HEK293T (cell line): ENCODE measurements at regions of chr16 and their contacts with region 1.

Region 1: DNA sequence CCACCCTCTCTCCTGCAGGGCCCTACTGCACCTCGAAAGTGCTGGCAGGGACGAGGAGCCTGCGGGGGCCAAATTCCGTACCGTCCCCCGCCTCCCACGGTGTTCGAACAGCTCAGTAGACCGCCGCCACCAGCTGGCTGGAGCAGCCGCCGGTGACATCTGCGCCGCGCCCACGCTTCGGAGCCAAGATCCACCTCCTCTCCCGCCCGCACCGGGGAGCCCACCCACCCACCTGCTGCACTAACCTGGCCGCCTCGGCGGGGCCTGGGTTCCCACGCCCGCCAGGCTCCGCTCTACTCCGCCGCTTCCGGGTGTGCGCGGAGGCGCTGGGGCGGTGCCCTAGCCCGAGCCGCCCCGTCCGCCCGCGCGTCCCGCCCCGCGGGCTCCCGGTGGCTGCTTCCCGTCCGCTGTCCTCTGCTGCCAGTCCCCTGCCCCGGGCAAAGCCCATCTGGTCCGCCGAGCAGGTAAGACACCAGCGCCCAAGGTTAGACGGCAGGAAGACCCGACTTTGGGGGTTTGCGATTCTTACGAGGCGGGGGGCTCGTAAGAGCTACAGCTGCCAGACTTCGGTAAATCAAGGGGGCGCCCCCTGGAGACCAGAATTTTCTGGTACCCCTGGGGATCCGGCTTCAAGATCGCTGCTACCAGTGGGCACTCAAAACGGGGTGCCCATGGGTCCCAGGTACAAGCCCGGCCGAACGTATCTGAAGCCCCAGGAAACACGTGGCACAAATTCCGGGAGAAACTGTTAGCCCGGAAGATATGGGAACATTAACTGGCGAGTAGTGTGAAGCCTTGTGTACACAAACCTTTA is at the starts of genes FBXL8 and TRADD:
- DNase-seq: peak; percentile 73

Region 2: DNA sequence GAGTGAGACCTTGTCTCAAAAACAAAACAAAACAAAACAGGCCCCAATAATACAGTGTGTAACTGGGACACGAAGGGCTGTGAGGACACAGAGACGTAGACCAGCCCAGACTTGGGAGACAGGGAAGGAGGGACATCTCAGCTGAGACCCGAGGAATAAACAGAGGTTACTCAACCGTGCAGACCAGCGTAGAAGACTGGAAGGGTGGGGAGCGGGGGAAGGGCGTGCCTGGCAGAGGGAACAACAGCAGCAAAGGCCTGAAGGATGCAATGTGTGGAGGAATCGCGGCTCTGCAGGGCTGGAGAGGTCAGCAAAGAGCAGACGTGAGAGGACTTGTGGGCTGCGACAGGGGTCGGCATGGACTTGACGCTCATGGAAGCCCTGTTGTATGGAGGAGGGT is 183.1 kb before region 1 on chr16:
- CTCF ChIA-PET with region 1: interaction called, 10 read pairs
- POLR2A ChIA-PET with region 1: no interaction called
- DNase-seq: no peak

Region 3: GRCh38 chr16:67017810-67018488 is 141.9 kb before region 1 on chr16:
- CTCF ChIA-PET with region 1: interaction called, 18 read pairs
- POLR2A ChIA-PET with region 1: interaction called, 8 read pairs
- DNase-seq: peak; percentile 88

Region 4: GRCh38 chr16:67104061-67104460 is 55.7 kb before region 1 on chr16:
- CTCF ChIA-PET with region 1: interaction called, 17 read pairs
- POLR2A ChIA-PET with region 1: no interaction called
- DNase-seq: peak; percentile 35

Region 5: GRCh38 chr16:67129422-67129821 is 30.4 kb before region 1 on chr16:
- CTCF ChIA-PET with region 1: interaction called, 10 read pairs
- POLR2A ChIA-PET with region 1: no interaction called
- DNase-seq: no peak

Region 6: DNA sequence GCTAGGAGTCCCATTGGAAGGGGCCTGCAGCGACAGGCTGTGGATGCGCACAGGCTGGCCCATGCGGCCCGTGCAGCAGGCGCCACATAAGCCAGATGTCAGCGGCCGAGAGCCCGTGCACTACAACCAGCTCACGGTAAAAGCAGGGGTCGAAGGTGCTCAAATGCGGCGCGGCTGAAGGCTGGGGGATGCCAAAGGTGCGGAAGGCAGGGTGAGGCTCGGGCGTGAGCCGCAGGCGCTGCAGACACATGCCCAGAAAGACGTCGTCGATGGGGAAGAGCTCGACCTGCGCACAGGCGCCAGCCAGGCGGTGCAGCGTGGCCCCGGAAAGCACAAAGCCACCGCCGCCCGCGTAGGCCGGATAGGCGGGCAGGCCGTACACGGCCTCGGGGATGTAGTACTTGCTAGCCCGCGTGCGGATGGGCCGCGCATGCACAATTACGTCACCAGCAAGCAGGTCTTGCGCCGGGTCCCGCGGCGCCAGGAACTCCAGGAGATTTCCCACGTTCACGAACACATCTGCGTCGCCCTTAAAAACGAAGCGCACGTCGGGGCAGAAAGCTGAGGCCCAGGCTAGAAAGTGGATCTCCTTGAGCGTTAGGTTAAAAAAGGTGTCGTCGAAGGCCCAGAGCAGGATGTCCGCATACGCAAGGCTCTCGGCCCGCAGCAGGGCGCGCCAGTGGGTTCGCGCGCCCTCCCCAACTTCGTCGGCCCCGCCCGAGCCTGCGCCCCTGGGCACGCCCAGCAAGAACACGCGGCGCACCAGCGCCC is 10.3 kb before region 1 on chr16:
- CTCF ChIA-PET with region 1: no interaction called
- POLR2A ChIA-PET with region 1: no interaction called
- DNase-seq: no peak

Region 7: GRCh38 chr16:67170168-67170947 is 10.6 kb after region 1 on chr16 and contains the start of gene NOL3:
- CTCF ChIA-PET with region 1: interaction called, 19 read pairs
- POLR2A ChIA-PET with region 1: interaction called, 9 read pairs
- DNase-seq: peak; percentile 62

Region 8: GRCh38 chr16:67198997-67199810 is 39.4 kb after region 1 on chr16 and contains the start of gene ELMO3:
- CTCF ChIA-PET with region 1: no interaction called
- POLR2A ChIA-PET with region 1: no interaction called
- DNase-seq: no peak